CD4-positive, alpha-beta T cell (primary cell): ENCODE measurements at regions of chr1 and their contacts with region 1.

Region 1: DNA sequence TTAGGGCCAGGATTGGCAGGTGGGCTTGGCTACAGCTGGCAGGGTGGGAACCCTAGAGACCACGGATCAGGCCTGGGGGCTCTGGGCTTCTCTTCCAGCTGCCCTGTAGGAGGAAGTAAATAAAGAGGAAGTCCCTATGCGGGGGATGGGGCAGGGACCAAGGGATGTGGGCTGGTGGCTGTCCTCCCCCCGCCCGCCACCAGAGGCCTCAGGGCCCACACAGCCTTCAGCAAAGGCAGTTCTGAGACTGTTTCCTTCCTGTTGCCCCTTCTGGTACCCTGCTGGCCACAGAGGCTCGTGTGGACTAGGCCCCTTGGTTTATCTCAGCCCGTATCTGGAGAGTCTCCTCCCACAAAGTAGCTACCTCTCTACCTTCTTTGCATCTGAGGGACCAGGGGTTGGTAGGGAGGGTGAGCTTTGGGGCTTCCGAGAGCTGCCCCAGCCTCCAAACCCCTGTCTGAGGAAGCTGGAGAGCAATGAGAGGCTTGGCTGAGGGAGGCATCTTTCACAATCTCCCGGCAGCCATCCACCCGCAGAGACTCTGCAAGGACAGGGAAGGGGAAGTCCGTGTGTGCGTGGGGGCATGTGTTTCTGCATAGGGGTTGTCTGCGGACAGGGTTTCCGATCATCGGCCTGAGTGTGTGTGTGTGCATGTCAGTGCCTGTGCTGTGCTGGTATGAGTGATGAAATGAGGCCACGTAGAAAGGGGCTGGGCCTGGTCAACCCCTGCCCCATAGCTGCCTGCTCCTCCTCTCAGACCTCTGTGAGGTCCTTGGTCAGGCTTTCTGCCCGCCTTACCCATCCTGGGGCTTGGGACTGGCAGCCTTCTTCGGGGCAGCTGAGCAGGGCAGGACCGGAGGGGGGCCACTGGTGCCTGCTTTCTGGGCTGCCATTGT is 12.5 kb downstream of the RPS6KA1 start:
- DNase-seq: peak; percentile 46 to 91 (median 66)
- ATAC-seq: peak; percentile 70
- H3K4me3 ChIP-seq: peak overlapping the region; percentile 40
- H3K4me3 Mint-ChIP-seq: peak overlapping the region; percentile 82
- H3K27ac ChIP-seq: peak overlapping the region; percentile 80 to 83
- H3K27ac Mint-ChIP-seq: peak overlapping the region; percentile 77
- H3K4me1 ChIP-seq: peaks cover 100% of the 10 kb centered on the region
- H3K4me1 Mint-ChIP-seq: peaks cover 90% of the 10 kb centered on the region
- H3K27me3 ChIP-seq: no peaks in the 10 kb centered on the region
- H3K27me3 Mint-ChIP-seq: no peaks in the 10 kb centered on the region
- CTCF ChIP-seq: peak; percentile 74

Region 2: GRCh38 chr1:26529655-26530409 is 12.2 kb before region 1 on chr1 and contains the start of gene RPS6KA1:
- CTCF ChIA-PET with region 1: interaction called, 7 read pairs
- POLR2A ChIA-PET with region 1: interaction called, 28 read pairs
- intact Hi-C with region 1: no loop called
- DNase-seq: peak; percentile 27 to 83 (median 54)
- ATAC-seq: peak; percentile 93
- H3K4me3 ChIP-seq: peak within 1 kb of the TSS; percentile 72
- H3K4me3 Mint-ChIP-seq: peak within 1 kb of the TSS; percentile 95
- H3K27ac ChIP-seq: peak within 1 kb of the TSS in 1 of 2 donors; percentile 11
- H3K27ac Mint-ChIP-seq: peak within 1 kb of the TSS; percentile 50
- H3K4me1 ChIP-seq: peaks cover 42% of the 10 kb centered on the region
- H3K4me1 Mint-ChIP-seq: peaks cover 24% of the 10 kb centered on the region
- H3K27me3 ChIP-seq: no peaks in the 10 kb centered on the region
- H3K27me3 Mint-ChIP-seq: no peaks in the 10 kb centered on the region
- CTCF ChIP-seq: no peak
- total RNA-seq, gene RPS6KA1: 29.1 to 29.6 TPM